CD8-positive, alpha-beta T cell (primary cell): ENCODE measurements at regions of chr2 and their contacts with region 1.

Region 1: DNA sequence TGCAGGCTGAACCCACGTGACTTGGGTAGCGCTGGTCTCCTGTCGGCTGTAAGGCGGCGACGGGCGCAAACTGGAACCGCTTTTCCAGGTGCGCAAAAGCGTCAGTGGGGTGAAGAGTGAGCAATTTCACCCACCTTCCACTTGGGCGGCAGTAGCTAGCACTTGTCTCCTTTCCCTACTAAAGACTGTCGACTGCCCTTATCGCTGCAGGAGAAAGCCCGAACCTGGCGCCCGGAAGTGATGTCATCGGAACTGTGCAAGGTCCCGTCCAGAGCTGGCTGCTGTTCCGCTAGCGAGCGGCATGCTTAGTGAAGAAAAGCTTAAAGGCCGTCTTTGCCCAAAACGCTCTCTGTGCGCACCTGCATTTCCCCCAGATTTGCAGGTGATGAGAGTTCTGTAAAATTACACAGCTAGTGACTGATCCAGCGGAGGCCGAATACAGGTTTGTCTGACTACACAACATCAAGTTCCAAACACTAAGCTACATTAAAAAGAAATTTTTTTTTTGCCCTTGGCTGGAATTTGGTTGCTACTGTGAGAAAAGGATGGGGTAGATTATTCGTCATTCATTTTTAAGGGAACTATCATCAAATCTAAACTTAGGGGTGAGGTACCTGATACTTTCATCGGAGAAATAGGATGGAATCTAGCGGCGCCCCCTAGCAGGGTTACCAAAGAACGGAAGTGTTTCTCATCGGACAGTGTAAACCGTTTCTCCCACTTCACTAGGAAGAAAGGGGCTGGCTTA is at the start of gene OSGEPL1:
- DNase-seq: peak; percentile 84 to 97 (median 94)
- ATAC-seq: peak; percentile 92
- H3K4me3 ChIP-seq: peak within 1 kb of the TSS; percentile 69 to 83
- H3K4me3 Mint-ChIP-seq: peak within 1 kb of the TSS; percentile 97
- H3K27ac ChIP-seq: peak within 1 kb of the TSS; percentile 85 to 88
- H3K27ac Mint-ChIP-seq: peak within 1 kb of the TSS; percentile 98
- H3K4me1 ChIP-seq: peaks cover 8% of the 10 kb centered on the region
- H3K4me1 Mint-ChIP-seq: peaks cover 15% of the 10 kb centered on the region
- H3K27me3 ChIP-seq: no peaks in the 10 kb centered on the region
- H3K27me3 Mint-ChIP-seq: no peaks in the 10 kb centered on the region
- CTCF ChIP-seq: peak; percentile 52
- total RNA-seq, gene OSGEPL1: 3.6 to 3.9 TPM

Region 2: DNA sequence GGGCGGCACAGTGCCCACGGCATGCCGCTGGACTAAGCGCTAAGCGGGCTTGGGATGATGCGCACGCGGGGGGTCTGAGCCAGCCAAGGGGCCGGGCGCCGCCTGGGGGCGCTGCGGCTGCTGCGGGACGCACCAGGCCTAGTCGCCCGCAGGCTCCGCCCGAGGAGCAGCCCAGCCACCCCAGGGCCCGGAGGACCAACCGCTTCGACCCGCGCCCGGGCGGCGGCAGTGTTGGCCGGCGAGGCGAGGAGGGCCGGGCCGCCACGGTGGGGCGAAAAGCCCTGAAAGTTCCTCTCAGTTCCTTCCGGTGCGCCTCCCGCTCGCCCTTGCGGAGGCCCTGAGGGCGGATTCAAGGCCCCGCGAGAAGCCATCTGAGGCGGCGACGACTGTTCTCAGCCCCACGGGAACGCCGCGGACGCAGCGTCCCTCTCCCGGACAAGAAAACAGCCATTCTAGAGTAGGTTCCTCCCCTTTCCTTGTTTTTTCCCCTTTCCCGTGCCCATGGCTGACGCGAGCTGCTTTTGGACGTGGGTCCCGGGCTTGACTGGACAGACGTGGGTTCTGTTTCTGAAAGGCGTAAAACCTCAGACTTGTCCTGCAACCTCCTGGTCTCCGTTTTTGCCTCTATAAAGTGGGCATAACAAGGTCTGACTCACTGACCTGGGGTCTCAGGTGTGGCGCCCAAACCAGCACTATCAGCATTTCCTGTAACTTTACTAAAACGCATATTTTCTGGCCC is 88.2 kb before region 1 on chr2 and contains the start of gene ANKAR:
- CTCF ChIA-PET with region 1: interaction called, 5 read pairs
- POLR2A ChIA-PET with region 1: interaction called, 24 read pairs
- intact Hi-C with region 1: loop called (anchors 1 to 2 kb)
- DNase-seq: peak; percentile 64 to 91 (median 79)
- ATAC-seq: peak; percentile 91
- H3K4me3 ChIP-seq: peak within 1 kb of the TSS; percentile 81 to 88
- H3K4me3 Mint-ChIP-seq: peak within 1 kb of the TSS; percentile 91
- H3K27ac ChIP-seq: peak within 1 kb of the TSS; percentile 86 to 97
- H3K27ac Mint-ChIP-seq: peak within 1 kb of the TSS; percentile 99
- H3K4me1 ChIP-seq: peaks cover 11% of the 10 kb centered on the region
- H3K4me1 Mint-ChIP-seq: peaks cover 49% of the 10 kb centered on the region
- H3K27me3 ChIP-seq: no peaks in the 10 kb centered on the region
- H3K27me3 Mint-ChIP-seq: no peaks in the 10 kb centered on the region
- CTCF ChIP-seq: peak; percentile 72
- total RNA-seq, gene ANKAR: 7.3 to 9.2 TPM

Region 3: GRCh38 chr2:189698020-189698887 is 64.5 kb before region 1 on chr2:
- CTCF ChIA-PET with region 1: interaction called, 3 read pairs
- POLR2A ChIA-PET with region 1: no interaction called
- intact Hi-C with region 1: loop called in 1 of 2 experiments (anchors 2 kb)
- DNase-seq: peak in 6 of 9 experiments; percentile 14 to 76 (median 46)
- ATAC-seq: peak; percentile 66
- H3K4me3 ChIP-seq: no peak overlapping the region
- H3K4me3 Mint-ChIP-seq: peak overlapping the region; percentile 53
- H3K27ac ChIP-seq: no peak overlapping the region
- H3K27ac Mint-ChIP-seq: peak overlapping the region; percentile 6
- H3K4me1 ChIP-seq: no peaks in the 10 kb centered on the region
- H3K4me1 Mint-ChIP-seq: peaks cover 5% of the 10 kb centered on the region
- H3K27me3 ChIP-seq: no peaks in the 10 kb centered on the region
- H3K27me3 Mint-ChIP-seq: no peaks in the 10 kb centered on the region
- CTCF ChIP-seq: peak; percentile 80

Region 4: GRCh38 chr2:189751080-189751658 is 11.6 kb before region 1 on chr2:
- CTCF ChIA-PET with region 1: interaction called, 31 read pairs
- POLR2A ChIA-PET with region 1: interaction called, 9 read pairs
- intact Hi-C with region 1: no loop called
- DNase-seq: peak in 8 of 9 experiments; percentile 4 to 66 (median 34)
- ATAC-seq: peak; percentile 84
- H3K4me3 ChIP-seq: no peak overlapping the region
- H3K4me3 Mint-ChIP-seq: no peak overlapping the region
- H3K27ac ChIP-seq: no peak overlapping the region
- H3K27ac Mint-ChIP-seq: no peak overlapping the region
- H3K4me1 ChIP-seq: no peaks in the 10 kb centered on the region
- H3K4me1 Mint-ChIP-seq: peaks cover 4% of the 10 kb centered on the region
- H3K27me3 ChIP-seq: no peaks in the 10 kb centered on the region
- H3K27me3 Mint-ChIP-seq: no peaks in the 10 kb centered on the region
- CTCF ChIP-seq: peak; percentile 64

Region 5: GRCh38 chr2:189860161-189860560 is 97.4 kb after region 1 on chr2:
- CTCF ChIA-PET with region 1: no interaction called
- POLR2A ChIA-PET with region 1: no interaction called
- intact Hi-C with region 1: no loop called
- DNase-seq: no peak
- ATAC-seq: no peak
- H3K4me3 ChIP-seq: no peak overlapping the region
- H3K4me3 Mint-ChIP-seq: no peak overlapping the region
- H3K27ac ChIP-seq: no peak overlapping the region
- H3K27ac Mint-ChIP-seq: no peak overlapping the region
- H3K4me1 ChIP-seq: no peaks in the 10 kb centered on the region
- H3K4me1 Mint-ChIP-seq: no peaks in the 10 kb centered on the region
- H3K27me3 ChIP-seq: no peaks in the 10 kb centered on the region
- H3K27me3 Mint-ChIP-seq: no peaks in the 10 kb centered on the region
- CTCF ChIP-seq: no peak

Region 6: DNA sequence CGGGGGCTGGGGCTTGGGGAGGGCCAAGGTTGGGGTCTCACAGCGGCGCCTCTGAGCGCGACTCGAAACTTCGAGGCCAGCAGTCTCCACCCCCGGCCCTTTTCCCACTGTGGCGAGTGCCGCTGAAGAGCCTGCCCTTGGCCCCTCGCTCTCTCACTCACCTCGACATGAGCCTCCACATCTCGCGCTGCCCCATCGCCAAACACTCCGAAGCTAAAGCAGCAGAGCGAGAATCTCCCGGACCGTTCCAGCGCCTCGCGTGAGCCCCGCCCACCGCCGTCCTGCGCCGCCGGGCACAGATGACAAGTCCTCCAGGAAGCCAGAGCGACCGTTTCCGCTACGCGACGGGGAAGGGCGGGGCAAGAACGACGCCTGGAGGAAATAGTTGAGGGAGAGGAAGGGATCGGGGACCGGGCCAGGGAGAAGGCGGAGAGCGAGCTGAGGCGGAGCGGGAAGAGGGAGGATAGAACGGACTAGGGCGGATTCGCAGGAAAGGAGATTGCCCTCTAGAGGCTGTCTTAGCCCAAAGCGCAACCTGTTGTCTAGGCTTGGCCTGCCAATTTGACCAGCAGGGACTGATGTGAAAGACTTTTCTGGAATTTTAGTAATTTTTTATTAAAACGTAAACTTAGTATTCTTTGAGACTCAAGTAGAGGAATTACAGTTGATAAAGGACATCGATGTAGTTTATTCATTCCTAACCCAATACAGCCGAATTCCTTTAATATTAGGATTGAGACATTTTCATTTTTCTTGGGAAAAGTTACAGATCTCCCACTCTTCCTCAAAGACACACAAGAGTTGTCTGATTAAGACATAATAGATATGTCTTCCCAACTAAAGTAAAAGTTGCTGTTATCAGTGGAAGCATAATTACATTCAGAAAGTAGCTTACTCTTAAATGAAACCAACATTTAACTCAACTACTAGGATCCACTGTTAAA is 557.1 kb after region 1 on chr2 and contains the start of gene HIBCH:
- CTCF ChIA-PET with region 1: no interaction called
- POLR2A ChIA-PET with region 1: interaction called, 4 read pairs
- intact Hi-C with region 1: loop called in 1 of 2 experiments (anchors 5 kb)
- DNase-seq: peak; percentile 51 to 91 (median 83)
- ATAC-seq: peak; percentile 89
- H3K4me3 ChIP-seq: peak within 1 kb of the TSS; percentile 77 to 94
- H3K4me3 Mint-ChIP-seq: peak within 1 kb of the TSS; percentile 100
- H3K27ac ChIP-seq: peak within 1 kb of the TSS; percentile 66 to 88
- H3K27ac Mint-ChIP-seq: peak within 1 kb of the TSS; percentile 98
- H3K4me1 ChIP-seq: peaks cover 19% of the 10 kb centered on the region
- H3K4me1 Mint-ChIP-seq: peaks cover 50% of the 10 kb centered on the region
- H3K27me3 ChIP-seq: no peaks in the 10 kb centered on the region
- H3K27me3 Mint-ChIP-seq: no peaks in the 10 kb centered on the region
- CTCF ChIP-seq: peak; percentile 70
- total RNA-seq, gene HIBCH: 3.7 to 5.8 TPM